ENCODE measurements at regions of chr4 and their contacts with region 1.

Region 1: GRCh38 chr4:150010525-150011126 is 67.6 kb upstream of the DCLK2 start:
- DNase-seq: no peak
- H3K4me3 ChIP-seq: no peak overlapping the region
- H3K27ac ChIP-seq: no peak overlapping the region
- H3K4me1 ChIP-seq: no peaks in the 10 kb centered on the region
- H3K27me3 ChIP-seq: no peaks in the 10 kb centered on the region
- CTCF ChIP-seq: peak in 5 of 6 experiments; percentile 33 to 60 (median 40)
- POLR2A ChIP-seq: no peak

Region 2: GRCh38 chr4:149785696-149786431 is 224.8 kb before region 1 on chr4:
- intact Hi-C with region 1: no loop called
- DNase-seq: no peak
- H3K4me3 ChIP-seq: no peak overlapping the region
- H3K27ac ChIP-seq: no peak overlapping the region
- H3K4me1 ChIP-seq: no peaks in the 10 kb centered on the region
- H3K27me3 ChIP-seq: no peaks in the 10 kb centered on the region
- CTCF ChIP-seq: no peak
- POLR2A ChIP-seq: no peak

Region 3: DNA sequence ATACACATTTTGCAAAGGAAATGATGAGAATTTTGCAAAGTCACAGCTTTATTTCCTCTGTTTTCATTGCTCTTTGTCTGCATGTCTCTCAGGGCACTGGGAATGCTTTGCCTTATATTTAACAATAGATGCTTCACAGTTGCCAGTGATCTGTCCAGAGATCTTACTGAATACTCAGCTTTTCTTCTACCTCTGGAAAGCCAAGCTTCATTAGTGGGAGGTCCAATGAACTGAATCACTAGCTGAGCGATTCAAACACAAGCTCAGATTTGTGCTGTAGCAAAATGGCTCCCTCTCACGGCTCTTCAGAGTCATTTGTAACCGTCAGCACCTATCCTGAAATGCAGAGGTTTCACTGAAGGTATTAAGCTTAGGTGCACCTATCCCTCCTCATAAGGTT is 206.6 kb after region 1 on chr4:
- intact Hi-C with region 1: loop called (anchors 5 kb)
- DNase-seq: no peak
- H3K4me3 ChIP-seq: no peak overlapping the region
- H3K27ac ChIP-seq: peak overlapping the region in 1 of 4 donors; percentile 49
- H3K4me1 ChIP-seq: peaks cover 0 to 21% (median 0%) of the 10 kb centered on the region in 3 donors
- H3K27me3 ChIP-seq: no peaks in the 10 kb centered on the region
- CTCF ChIP-seq: peak in 3 of 6 experiments; percentile 14 to 47 (median 19)
- POLR2A ChIP-seq: no peak

Region 4: DNA sequence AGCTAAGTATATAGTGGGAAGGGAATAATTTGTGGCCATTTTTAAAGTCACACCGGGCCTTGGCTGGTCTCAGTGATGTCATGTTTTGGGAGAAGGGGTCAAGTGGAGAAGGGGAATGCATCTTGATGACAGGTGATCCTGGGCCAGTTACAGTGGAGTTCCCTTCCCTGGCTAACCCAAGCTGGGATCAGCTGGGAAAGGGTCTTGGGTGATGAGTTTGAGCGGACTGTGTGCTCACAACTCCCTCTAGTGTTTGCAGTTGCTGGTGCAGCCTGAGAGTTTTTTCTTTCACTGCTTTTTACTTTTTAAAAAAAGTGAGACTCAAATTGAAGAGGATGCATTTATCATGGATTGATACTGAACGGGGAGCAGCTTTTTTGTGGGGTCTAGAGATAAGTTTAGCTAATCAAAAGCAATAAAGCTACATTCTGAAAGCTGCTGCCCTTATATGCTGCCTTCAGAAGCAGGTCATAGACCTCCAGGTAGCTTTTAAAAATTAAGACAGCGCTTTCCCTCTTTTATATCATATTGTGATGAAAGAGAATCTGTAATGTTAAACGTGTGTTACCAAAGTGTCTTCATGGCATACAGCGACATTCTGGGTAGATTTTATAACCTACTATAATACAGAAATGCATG is 232.3 kb after region 1 on chr4:
- intact Hi-C with region 1: loop called (anchors 10 kb)
- DNase-seq: no peak
- H3K4me3 ChIP-seq: no peak overlapping the region
- H3K27ac ChIP-seq: no peak overlapping the region
- H3K4me1 ChIP-seq: no peaks in the 10 kb centered on the region
- H3K27me3 ChIP-seq: no peaks in the 10 kb centered on the region
- CTCF ChIP-seq: peak; percentile 24 to 84 (median 66)
- POLR2A ChIP-seq: no peak